Heart left ventricle (tissue), 16 donors: ENCODE measurements at regions of chr12 and their contacts with region 1.

Region 1: GRCh38 chr12:92145731-92146496 is at the start of gene BTG1:
- DNase-seq: peak; percentile 98 to 99 (median 99)
- ATAC-seq: peak; percentile 89 to 93 (median 90)
- H3K4me3 ChIP-seq: peak within 1 kb of the TSS; percentile 76 to 96 (median 92)
- H3K27ac ChIP-seq: peak within 1 kb of the TSS; percentile 92 to 100 (median 98)
- H3K4me1 ChIP-seq: peaks cover 0 to 35% (median 4%) of the 10 kb centered on the region in 12 donors
- H3K27me3 ChIP-seq: no peaks in the 10 kb centered on the region
- CTCF ChIP-seq: peak in 1 of 12 donors; percentile 7
- POLR2A ChIP-seq: peak; percentile 95 to 99
- total RNA-seq, gene BTG1: 20.5 to 120 (median 58.3) TPM

Region 2: GRCh38 chr12:91588874-91589454 is 557.0 kb before region 1 on chr12:
- intact Hi-C with region 1: loop called in 1 of 10 experiments (anchors 10 kb)
- DNase-seq: no peak
- ATAC-seq: peak in 3 of 4 donors; percentile 15 to 44 (median 33)
- H3K4me3 ChIP-seq: no peak overlapping the region
- H3K27ac ChIP-seq: peak overlapping the region in 1 of 12 donors; percentile 19
- H3K4me1 ChIP-seq: peaks cover 0 to 11% (median 4%) of the 10 kb centered on the region in 12 donors
- H3K27me3 ChIP-seq: no peaks in the 10 kb centered on the region
- CTCF ChIP-seq: no peak
- POLR2A ChIP-seq: no peak

Region 3: GRCh38 chr12:91985002-91985787 is 160.7 kb before region 1 on chr12:
- intact Hi-C with region 1: loop called in 4 of 10 experiments (anchors 5 to 10 kb)
- DNase-seq: no peak
- ATAC-seq: peak in 1 of 4 donors; percentile 56
- H3K4me3 ChIP-seq: no peak overlapping the region
- H3K27ac ChIP-seq: peak overlapping the region in 4 of 12 donors; percentile 2 to 46 (median 30)
- H3K4me1 ChIP-seq: peaks cover 0 to 58% (median 29%) of the 10 kb centered on the region in 12 donors
- H3K27me3 ChIP-seq: no peaks in the 10 kb centered on the region
- CTCF ChIP-seq: no peak
- POLR2A ChIP-seq: no peak

Region 4: GRCh38 chr12:92218394-92219077 is 72.6 kb after region 1 on chr12:
- intact Hi-C with region 1: loop called in 1 of 10 experiments (anchors 5 kb)
- DNase-seq: no peak
- ATAC-seq: peak in 1 of 4 donors; percentile 44
- H3K4me3 ChIP-seq: no peak overlapping the region
- H3K27ac ChIP-seq: peak overlapping the region in 1 of 12 donors; percentile 75
- H3K4me1 ChIP-seq: peaks cover 0 to 27% (median 2%) of the 10 kb centered on the region in 12 donors
- H3K27me3 ChIP-seq: no peaks in the 10 kb centered on the region
- CTCF ChIP-seq: no peak
- POLR2A ChIP-seq: no peak

Region 5: DNA sequence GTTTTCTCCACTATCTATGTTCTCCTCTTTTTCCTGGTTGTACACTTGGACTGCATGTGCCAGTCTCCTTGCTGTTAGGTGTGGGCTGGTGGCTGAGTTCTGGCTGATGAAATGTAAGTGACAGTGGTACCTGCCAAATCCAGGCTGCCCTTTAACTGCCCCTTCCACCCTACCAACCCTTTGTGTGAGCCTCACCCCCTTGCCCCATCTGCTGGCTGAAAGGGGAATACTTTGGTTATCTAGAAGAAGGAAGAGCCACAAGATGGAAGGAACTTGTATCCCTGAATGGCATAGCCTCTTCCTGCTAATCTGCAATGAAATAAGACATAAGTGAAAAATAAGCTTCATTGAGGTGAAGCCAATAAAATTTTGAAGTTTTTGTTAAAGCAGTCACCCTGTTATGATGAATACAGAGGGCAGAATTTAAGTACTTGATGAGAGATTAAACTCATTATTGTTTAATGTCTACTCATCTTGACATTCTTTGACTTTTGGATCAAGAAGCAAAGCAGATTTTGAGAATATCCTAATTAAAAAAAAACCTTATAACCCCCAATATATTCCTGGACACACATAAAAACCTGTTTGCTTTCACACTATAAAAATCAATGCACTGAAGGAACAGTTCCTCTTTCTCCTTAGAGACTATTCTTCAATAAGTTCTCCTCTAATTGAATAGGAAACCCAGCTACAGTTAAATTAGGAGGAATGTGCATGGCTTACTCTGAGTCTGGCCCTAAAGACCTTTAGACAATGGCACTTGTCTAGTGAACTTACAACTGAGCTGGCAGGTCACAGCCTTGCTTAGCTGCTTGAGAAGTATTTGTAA is 262.4 kb after region 1 on chr12:
- intact Hi-C with region 1: loop called in 5 of 10 experiments (anchors 5 to 10 kb)
- DNase-seq: peak in 2 of 5 donors; percentile 57 to 63
- ATAC-seq: peak; percentile 49 to 94 (median 78)
- H3K4me3 ChIP-seq: no peak overlapping the region
- H3K27ac ChIP-seq: no peak overlapping the region
- H3K4me1 ChIP-seq: peaks cover 0 to 38% (median 7%) of the 10 kb centered on the region in 12 donors
- H3K27me3 ChIP-seq: no peaks in the 10 kb centered on the region
- CTCF ChIP-seq: peak in 7 of 12 donors; percentile 13 to 52 (median 34)
- POLR2A ChIP-seq: no peak

Region 6: GRCh38 chr12:92551853-92552397 is 406.0 kb after region 1 on chr12:
- intact Hi-C with region 1: loop called in 3 of 10 experiments (anchors 5 kb)
- DNase-seq: no peak
- ATAC-seq: no peak
- H3K4me3 ChIP-seq: no peak overlapping the region
- H3K27ac ChIP-seq: peak overlapping the region in 8 of 12 donors; percentile 63 to 90 (median 84)
- H3K4me1 ChIP-seq: peaks cover 0 to 55% (median 28%) of the 10 kb centered on the region in 12 donors
- H3K27me3 ChIP-seq: no peaks in the 10 kb centered on the region
- CTCF ChIP-seq: no peak
- POLR2A ChIP-seq: no peak